ENCODE measurements at regions of chr15 and their contacts with region 1.

Region 1: DNA sequence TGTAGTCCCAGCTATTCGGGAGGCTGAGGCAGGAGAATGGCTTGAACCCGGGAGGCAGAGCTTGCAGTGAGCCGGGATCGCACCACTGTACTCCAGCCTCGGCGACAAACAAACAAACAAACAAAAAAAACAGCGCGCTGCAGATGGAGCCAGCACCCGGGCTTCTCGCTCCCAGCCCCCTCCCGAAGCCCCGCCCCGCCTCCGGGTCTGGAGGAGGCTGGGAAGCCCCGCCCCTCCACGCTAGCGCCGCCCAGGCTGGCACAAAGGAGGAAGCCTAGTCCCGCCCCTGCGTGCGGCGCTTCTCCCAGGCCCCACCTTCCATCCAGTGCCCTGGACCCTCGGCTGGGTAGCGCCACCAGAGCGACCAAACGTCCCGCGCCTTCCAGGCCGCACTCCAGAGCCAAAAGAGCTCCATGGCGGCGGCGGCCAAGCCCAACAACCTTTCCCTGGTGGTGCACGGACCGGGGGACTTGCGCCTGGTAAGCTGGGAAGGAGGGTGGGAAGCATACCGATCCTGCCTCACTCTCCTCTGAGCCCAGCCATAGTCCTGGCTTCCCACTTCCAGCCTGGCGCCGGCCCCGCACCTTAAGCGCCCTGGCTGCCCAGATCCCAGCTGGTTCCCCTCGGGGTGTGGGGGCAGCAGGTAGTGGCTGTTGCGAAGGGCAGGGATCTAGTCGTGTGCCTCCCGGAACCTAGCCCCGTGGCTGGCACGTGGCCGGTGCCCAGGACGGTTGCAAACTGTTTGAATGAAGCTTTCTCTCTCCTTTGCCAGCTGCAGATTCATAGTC is at the start of gene SORD:
- DNase-seq: peak; percentile 68
- ATAC-seq: peak; percentile 99
- H3K4me3 ChIP-seq: peak within 1 kb of the TSS; percentile 89 to 99
- H3K27ac ChIP-seq: peak within 1 kb of the TSS; percentile 76
- H3K4me1 ChIP-seq: peaks cover 4 to 20% of the 10 kb centered on the region in 2 experiments
- H3K27me3 ChIP-seq: no peaks in the 10 kb centered on the region
- CTCF ChIP-seq: no peak
- POLR2A ChIP-seq: no peak
- RAD21 ChIP-seq: no peak
- total RNA-seq, gene SORD: 116 TPM

Region 2: DNA sequence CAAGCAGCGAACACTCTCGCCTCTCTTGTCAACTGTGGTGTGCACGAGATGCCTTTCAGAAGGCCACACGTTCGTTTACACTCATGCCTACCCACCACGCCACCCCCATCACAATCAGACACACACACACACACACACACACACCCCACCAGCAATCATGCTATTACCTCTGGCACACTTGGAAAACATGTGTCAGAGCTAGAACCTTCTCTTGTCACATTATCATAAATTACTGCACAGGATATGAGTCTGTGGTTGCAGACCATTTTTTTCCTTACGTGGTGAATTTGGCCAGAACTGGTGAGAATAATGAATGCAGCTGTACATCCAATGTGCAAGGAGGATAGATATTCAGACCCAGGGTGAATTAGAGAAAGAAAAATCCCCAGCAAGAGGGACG is 234.3 kb before region 1 on chr15:
- CTCF ChIA-PET with region 1: no interaction called
- POLR2A ChIA-PET with region 1: no interaction called
- RAD21 ChIA-PET with region 1: no interaction called
- intact Hi-C with region 1: no loop called
- DNase-seq: no peak
- ATAC-seq: no peak
- H3K4me3 ChIP-seq: no peak overlapping the region
- H3K27ac ChIP-seq: no peak overlapping the region
- H3K4me1 ChIP-seq: peaks cover 2 to 4% of the 10 kb centered on the region in 2 experiments; a peak in 3 of 4 replicates
- H3K27me3 ChIP-seq: no peaks in the 10 kb centered on the region
- CTCF ChIP-seq: no peak
- POLR2A ChIP-seq: no peak
- RAD21 ChIP-seq: no peak

Region 3: DNA sequence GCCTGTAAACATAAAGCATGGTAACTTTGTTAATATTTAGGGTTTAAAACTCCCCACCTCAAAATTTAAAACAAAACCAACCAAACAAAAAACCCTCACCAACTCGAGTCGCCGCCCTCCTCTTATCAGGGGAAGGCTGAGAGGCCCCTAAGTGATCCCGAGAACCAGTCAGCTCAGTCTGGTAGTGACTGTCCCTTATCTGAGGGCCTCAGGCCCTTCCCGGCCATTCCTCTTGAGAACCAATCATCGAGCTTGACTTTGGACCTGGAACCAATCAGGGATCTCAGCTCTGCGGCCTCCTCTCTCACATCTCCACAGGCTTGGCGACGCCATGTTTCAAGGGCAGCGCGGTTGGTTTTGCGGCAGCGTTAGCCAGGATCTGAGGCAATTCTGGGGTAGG is 66.7 kb before region 1 on chr15 and contains the start of gene TERB2:
- CTCF ChIA-PET with region 1: no interaction called
- POLR2A ChIA-PET with region 1: no interaction called
- RAD21 ChIA-PET with region 1: no interaction called
- intact Hi-C with region 1: no loop called
- DNase-seq: no peak
- ATAC-seq: no peak
- H3K4me3 ChIP-seq: no peak within 1 kb of the TSS
- H3K27ac ChIP-seq: no peak within 1 kb of the TSS
- H3K4me1 ChIP-seq: no peaks in the 10 kb centered on the region
- H3K27me3 ChIP-seq: no peaks in the 10 kb centered on the region
- CTCF ChIP-seq: no peak
- POLR2A ChIP-seq: no peak
- RAD21 ChIP-seq: no peak
- total RNA-seq, gene TERB2: not detected

Region 4: GRCh38 chr15:44999105-44999504 is 24.0 kb before region 1 on chr15:
- CTCF ChIA-PET with region 1: no interaction called
- POLR2A ChIA-PET with region 1: no interaction called
- RAD21 ChIA-PET with region 1: no interaction called
- intact Hi-C with region 1: loop called (anchors 2 kb)
- DNase-seq: no peak
- ATAC-seq: no peak
- H3K4me3 ChIP-seq: no peak overlapping the region
- H3K27ac ChIP-seq: no peak overlapping the region
- H3K4me1 ChIP-seq: no peaks in the 10 kb centered on the region
- H3K27me3 ChIP-seq: no peaks in the 10 kb centered on the region
- CTCF ChIP-seq: no peak
- POLR2A ChIP-seq: no peak
- RAD21 ChIP-seq: no peak